OCI-LY7 (cell line): ENCODE measurements at regions of chr10 and their contacts with region 1.

Region 1: DNA sequence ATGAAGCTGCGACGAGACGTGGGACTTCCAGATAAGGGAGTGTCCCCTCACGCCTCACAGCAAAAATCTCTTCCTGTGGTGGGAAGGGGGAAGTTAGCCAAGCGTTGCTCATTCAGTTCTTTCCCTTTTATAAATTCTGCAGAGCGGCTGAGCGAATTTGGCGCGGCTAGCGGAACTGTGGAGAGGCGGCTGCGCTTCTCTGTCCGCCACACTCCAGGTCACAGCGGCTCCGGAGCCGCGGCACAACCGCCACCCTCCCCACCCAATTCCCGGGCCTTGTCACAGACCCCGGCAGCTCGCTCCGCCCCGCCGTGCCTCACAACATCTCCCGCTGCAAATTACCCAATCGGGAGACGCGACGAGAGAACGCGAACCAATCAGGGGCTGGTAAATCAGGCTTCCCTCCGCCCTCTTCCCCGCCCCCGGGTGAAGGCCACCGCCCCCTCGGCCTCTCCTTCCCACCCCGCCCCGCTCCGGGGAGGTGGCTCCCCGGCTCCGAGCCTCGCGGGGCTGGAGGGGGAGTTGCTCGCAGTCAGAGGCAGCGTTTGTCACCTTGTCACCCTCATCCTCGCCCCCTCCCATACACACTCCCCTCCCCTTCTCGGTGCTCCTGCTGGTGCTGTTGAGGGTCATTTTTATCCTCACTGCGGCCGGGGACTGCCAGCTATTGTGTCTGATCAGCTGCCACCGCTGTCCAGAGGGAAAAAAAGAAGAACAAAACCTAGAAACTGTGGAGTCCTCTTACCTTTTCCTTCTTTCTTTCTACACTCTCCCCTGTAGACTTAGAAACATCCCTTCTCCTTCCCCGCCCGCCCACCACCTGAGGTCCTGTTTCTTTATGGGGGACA is 918 bp upstream of the ARHGAP21 start:
- DNase-seq: peak; percentile 97
- H3K4me3 ChIP-seq: peak overlapping the region; percentile 88
- H3K27ac ChIP-seq: peak overlapping the region; percentile 79
- H3K4me1 ChIP-seq: peaks cover 25% of the 10 kb centered on the region
- CTCF ChIP-seq: no peak

Region 2: GRCh38 chr10:23438550-23439441 is 1285.8 kb before region 1 on chr10 and contains the start of gene OTUD1:
- CTCF ChIA-PET with region 1: no interaction called
- POLR2A ChIA-PET with region 1: no interaction called
- intact Hi-C with region 1: loop called (anchors 10 kb)
- DNase-seq: peak; percentile 96
- H3K4me3 ChIP-seq: peak within 1 kb of the TSS; percentile 93
- H3K27ac ChIP-seq: peak within 1 kb of the TSS; percentile 45
- H3K4me1 ChIP-seq: peaks cover 32% of the 10 kb centered on the region
- CTCF ChIP-seq: no peak
- total RNA-seq, gene OTUD1: 4.5 and 5.5 TPM in 2 replicates

Region 3: DNA sequence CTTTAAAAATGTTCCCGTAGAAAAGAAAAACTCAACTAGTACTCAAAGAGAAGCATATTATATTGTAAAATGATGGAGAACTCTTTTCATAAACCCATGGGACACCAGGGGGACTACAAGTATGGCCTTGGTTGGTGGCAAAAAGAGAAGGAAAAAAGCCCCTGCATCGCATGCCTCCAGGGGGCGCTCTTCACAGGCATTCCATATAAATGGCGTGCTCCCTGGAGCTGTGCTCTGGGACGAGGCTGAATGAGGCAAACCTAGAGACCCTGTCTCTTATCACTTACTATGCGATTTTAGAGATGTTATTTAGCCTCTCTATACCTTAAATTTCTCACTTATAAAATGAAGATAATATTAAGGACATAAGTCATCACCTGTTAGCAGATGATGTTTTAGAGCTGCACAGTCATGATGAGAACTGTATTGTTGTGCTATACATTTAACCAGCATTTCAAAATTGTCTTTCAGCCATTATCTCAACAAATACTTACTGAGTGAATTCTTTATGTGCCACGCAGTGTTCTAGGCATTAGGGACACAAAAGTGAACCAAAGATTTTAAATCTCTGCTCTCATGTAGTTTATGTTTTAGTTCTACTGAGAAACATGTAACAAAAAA is 106.7 kb before region 1 on chr10:
- CTCF ChIA-PET with region 1: no interaction called
- POLR2A ChIA-PET with region 1: interaction called, 9 read pairs
- intact Hi-C with region 1: loop called (anchors 5 kb)
- DNase-seq: peak; percentile 47
- H3K4me3 ChIP-seq: no peak overlapping the region
- H3K27ac ChIP-seq: no peak overlapping the region
- H3K4me1 ChIP-seq: peaks cover 4% of the 10 kb centered on the region
- CTCF ChIP-seq: peak; percentile 94

Region 4: DNA sequence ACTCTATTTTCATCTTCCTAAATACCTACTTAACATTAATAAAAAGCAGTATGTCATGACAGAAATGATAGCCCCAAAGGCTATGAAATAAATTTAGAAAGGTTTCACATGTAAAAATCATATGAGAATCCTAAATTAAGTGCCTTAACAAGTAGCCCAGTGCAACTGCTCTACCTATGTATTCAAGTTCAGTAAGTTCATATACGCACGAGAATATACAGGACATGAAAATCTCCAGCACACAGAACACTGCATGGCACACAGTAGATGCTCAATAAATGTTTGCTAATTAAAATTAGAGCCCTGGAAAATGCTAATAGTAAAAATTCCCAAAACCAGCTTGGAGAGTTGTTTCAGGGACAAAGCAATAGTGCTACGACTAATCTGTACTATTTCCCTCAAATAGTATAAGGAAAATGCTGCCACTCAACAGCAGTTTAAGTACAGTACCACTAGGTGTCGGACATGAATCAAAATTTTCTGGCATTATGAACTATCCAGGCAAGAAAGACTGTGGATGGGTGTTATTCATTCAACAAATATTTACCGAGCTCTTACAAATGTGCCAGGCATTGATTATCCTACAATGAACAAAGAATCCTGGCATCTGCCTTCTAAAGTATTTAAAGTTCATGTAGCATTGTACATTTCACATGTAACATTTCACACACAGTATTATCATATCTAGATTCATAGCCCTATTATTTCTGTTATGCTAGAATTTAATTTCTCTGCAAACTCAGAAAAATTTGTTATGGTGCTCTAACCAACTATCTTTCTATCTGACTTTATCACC is 81.8 kb before region 1 on chr10:
- CTCF ChIA-PET with region 1: no interaction called
- POLR2A ChIA-PET with region 1: interaction called, 3 read pairs
- intact Hi-C with region 1: loop called (anchors 5 kb)
- DNase-seq: peak; percentile 56
- H3K4me3 ChIP-seq: no peak overlapping the region
- H3K27ac ChIP-seq: no peak overlapping the region
- H3K4me1 ChIP-seq: no peaks in the 10 kb centered on the region
- CTCF ChIP-seq: peak; percentile 88

Region 5: DNA sequence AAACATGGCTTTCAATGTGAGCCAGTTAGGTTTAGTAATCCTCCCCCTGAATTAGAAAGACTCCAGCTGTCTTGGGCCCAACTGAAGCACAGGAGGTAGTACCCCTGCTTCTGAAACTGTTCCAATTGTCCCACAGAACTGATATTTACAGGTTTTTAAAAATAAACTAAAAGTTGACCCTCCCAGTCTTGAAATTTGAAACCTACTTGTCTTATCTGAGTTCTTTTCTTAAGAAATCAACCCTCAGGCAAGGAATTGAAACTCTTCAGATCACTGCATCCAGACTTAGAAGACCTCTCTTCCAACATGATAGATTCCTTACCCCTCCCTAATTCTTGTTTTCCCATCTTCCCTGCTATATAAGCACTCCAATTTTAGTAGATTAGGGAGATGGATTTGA is 12.4 kb after region 1 on chr10:
- CTCF ChIA-PET with region 1: no interaction called
- POLR2A ChIA-PET with region 1: no interaction called
- intact Hi-C with region 1: no loop called
- DNase-seq: no peak
- H3K4me3 ChIP-seq: no peak overlapping the region
- H3K27ac ChIP-seq: no peak overlapping the region
- H3K4me1 ChIP-seq: no peaks in the 10 kb centered on the region
- CTCF ChIP-seq: no peak

Region 6: DNA sequence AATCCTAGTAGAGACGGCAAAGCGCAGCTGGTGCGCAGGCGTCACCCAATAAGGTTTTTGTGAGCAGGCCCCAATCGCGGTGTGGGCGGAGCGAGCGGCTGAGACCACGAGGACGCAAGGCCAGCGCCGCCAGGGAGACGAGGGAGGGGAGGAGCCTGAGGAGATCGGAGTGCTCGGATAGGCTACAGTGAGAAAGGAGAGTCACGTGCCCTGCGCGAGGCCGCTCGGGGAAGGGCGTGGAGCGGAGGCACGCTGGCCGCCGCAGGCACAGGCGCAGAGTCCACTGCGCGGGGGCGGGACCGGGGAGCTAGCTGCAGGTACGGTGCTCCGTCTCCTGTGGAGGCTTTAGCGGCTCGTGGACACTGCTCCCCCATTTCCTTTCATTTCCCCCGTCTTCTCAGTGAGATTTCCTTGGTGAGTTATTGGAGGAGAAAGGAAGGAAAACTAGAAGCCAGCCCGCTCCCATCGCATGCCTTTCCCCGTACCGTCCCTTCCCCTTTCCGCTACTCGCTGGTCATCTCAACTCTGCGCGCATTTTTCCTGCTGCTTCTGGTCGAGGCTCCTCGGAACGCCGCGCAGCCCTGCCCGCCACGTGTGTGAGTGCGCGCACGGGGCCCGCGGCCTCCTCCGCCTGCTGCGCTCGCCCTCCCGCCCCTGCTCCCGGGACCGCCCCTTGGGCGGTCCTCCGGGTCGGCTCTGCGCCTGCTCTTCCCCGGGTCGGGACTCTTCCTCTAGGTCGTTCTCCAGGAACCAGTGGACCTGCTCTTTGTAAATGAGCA is 292.0 kb after region 1 on chr10 and contains the start of gene THNSL1:
- CTCF ChIA-PET with region 1: interaction called, 3 read pairs
- POLR2A ChIA-PET with region 1: no interaction called
- intact Hi-C with region 1: loop called (anchors 1 kb)
- DNase-seq: peak; percentile 97
- H3K4me3 ChIP-seq: peak within 1 kb of the TSS; percentile 78
- H3K27ac ChIP-seq: peak within 1 kb of the TSS; percentile 74
- H3K4me1 ChIP-seq: peaks cover 19% of the 10 kb centered on the region
- CTCF ChIP-seq: no peak
- total RNA-seq, gene THNSL1: 3.6 and 5.5 TPM in 2 replicates